Left ventricle myocardium inferior (tissue), 1 donor: ENCODE measurements at regions of chr14 and their contacts with region 1.

Region 1: GRCh38 chr14:75307700-75308379 is 29.2 kb downstream of the FOS start:
- DNase-seq: peak; percentile 83
- H3K4me3 ChIP-seq: no peak overlapping the region
- H3K27ac ChIP-seq: no peak overlapping the region
- H3K4me1 ChIP-seq: peaks cover 36% of the 10 kb centered on the region
- H3K27me3 ChIP-seq: no peaks in the 10 kb centered on the region
- CTCF ChIP-seq: peak; percentile 95

Region 2: DNA sequence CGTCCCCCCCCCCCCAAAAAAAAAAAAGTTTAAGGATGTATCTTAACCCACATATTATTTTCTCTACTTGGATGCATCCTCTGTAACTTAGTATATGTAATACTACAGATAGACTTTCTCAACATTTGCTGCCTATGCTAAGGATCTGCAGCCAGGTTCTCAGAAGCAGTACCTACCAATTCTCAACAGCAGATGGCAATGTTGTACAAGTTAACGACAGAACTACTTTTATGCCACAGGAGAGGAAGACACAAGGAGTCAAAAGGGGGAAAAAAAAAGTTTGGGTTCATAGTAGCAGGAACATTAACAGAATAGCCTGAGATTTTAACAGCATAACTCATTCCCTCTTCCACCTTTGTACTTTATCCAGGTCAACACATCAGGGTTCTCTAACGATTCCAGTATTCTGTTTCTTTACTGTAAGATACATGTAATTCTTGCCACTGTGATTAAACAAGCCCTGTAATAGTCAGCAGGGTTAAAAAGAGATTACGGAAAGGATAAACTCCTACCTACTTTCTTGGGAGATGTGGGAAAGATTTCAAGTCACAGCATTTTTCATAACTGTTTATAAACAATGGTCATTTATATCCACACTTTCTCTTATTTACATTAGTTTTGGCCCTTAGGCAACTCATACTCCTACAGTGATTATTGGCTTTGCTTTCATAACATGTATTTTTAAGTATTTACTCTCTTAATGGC is 175.3 kb before region 1 on chr14:
- intact Hi-C with region 1: loop called (anchors 5 kb)
- DNase-seq: no peak
- H3K4me3 ChIP-seq: no peak overlapping the region
- H3K27ac ChIP-seq: peak overlapping the region; percentile 46
- H3K4me1 ChIP-seq: peaks cover 19% of the 10 kb centered on the region
- H3K27me3 ChIP-seq: no peaks in the 10 kb centered on the region
- CTCF ChIP-seq: peak; percentile 80

Region 3: GRCh38 chr14:75487155-75487671 is 179.4 kb after region 1 on chr14:
- intact Hi-C with region 1: loop called (anchors 2 kb)
- DNase-seq: no peak
- H3K4me3 ChIP-seq: no peak overlapping the region
- H3K27ac ChIP-seq: no peak overlapping the region
- H3K4me1 ChIP-seq: no peaks in the 10 kb centered on the region
- H3K27me3 ChIP-seq: no peaks in the 10 kb centered on the region
- CTCF ChIP-seq: no peak